Right ventricle myocardium inferior (tissue), 1 donor: ENCODE measurements at regions of chr6 and their contacts with region 1.

Region 1: GRCh38 chr6:105514306-105514705 is 111.4 kb upstream of the PREP start:
- DNase-seq: no peak
- ATAC-seq: peak; percentile 35

Region 2: DNA sequence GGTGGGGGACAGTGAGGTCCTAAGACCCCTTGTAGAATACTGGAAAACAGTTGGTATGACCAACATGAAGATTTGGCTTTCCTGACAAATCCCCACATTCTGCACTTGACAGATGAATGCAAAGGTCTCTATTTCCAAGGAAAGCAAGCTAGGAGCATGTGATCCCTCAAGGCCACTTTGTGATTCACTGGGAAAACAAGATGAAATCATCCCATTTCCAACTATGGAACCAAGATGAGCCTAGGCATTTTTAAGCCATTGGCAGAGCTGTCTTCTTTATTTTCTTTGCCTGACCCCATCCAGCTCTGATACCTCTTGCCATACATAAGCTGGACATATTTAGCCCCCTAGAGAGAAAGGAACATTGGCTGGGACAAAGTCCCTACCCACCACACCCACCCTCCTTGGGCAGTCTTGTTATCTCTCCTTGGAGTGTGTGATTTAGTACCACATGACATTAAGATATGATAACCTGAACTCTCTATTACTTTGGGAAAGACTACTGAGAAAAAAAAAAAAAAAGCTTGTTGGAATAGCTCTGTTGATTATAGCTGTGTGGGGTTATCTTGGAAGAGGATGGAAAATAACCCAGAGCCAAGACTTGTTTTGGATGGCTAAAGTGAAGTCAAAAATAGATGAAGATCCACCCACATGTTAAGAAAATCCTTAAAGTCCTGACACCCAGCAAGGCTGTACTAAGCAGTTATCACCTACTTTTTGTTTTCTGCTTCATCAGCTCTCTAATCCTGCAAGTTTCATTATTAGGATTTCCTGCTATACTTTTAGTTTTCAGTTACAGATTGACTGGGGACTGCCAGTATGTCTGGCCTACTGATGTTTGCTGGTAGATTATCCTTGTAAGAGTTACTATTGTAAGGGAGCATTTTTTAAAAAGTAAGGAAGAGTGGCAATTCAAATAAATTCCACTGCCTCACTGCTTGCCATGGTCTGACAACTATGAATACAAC is 21.3 kb before region 1 on chr6:
- intact Hi-C with region 1: loop called (anchors 1 kb)
- DNase-seq: no peak
- ATAC-seq: peak; percentile 31